ENCODE measurements at regions of chr9 and their contacts with region 1.

Region 1: GRCh38 chr9:113798062-113799030 is 77.8 kb upstream of the ZNF618 start:
- DNase-seq: no peak
- H3K4me3 ChIP-seq: no peak overlapping the region
- H3K27ac ChIP-seq: no peak overlapping the region
- H3K4me1 ChIP-seq: no peaks in the 10 kb centered on the region
- H3K27me3 ChIP-seq: no peaks in the 10 kb centered on the region
- CTCF ChIP-seq: no peak
- POLR2A ChIP-seq: no peak

Region 2: GRCh38 chr9:113131689-113132151 is 666.6 kb before region 1 on chr9:
- intact Hi-C with region 1: loop called (anchors 10 kb)
- DNase-seq: no peak
- H3K4me3 ChIP-seq: no peak overlapping the region
- H3K27ac ChIP-seq: no peak overlapping the region
- H3K4me1 ChIP-seq: no peaks in the 10 kb centered on the region
- H3K27me3 ChIP-seq: no peaks in the 10 kb centered on the region
- CTCF ChIP-seq: no peak
- POLR2A ChIP-seq: no peak